ENCODE measurements at regions of chr7 and their contacts with region 1.

Region 1: GRCh38 chr7:87345166-87345927 is at the start of gene CROT:
- DNase-seq: peak; percentile 96 to 97 (median 96)
- ATAC-seq: peak; percentile 99
- H3K4me3 ChIP-seq: peak within 1 kb of the TSS; percentile 57
- H3K27ac ChIP-seq: peak within 1 kb of the TSS; percentile 38; the same call in 1 of the 3 replicates
- H3K4me1 ChIP-seq: peaks cover 7 to 8% of the 10 kb centered on the region in 2 experiments; a peak in 4 of 5 replicates
- H3K27me3 ChIP-seq: no peaks in the 10 kb centered on the region
- CTCF ChIP-seq: no peak
- EP300 ChIP-seq: no peak
- POLR2A ChIP-seq: peak; percentile 77
- RAD21 ChIP-seq: no peak
- polyA plus RNA-seq, gene CROT: 4.0 to 4.5 TPM

Region 2: DNA sequence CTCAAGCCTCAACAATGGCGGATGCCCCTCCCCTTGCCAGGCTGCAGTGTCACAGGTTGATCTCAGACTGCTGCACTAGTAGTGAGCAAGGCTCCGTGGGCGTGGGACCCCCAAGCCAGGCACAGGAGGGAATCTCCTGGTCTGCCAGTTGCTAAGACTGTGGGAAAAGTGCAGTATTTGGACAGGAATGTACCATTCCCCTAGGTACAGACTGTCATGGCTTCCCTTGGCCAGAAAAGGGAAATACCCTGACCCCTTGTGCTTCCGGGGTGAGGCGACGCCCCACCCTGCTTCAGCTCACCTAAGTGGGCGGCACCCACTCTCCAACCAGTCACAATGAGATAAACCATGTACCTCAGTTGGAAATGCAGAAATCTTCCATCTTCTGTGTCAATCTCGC is 81.8 kb before region 1 on chr7:
- CTCF ChIA-PET with region 1: no interaction called
- POLR2A ChIA-PET with region 1: no interaction called
- in situ Hi-C with region 1: no loop called
- intact Hi-C with region 1: no loop called
- DNase-seq: no peak
- ATAC-seq: peak; percentile 40; the same call in 1 of the 3 replicates
- H3K4me3 ChIP-seq: no peak overlapping the region
- H3K27ac ChIP-seq: no peak overlapping the region
- H3K4me1 ChIP-seq: no peaks in the 10 kb centered on the region; a peak in 1 of 5 replicates
- H3K27me3 ChIP-seq: no peaks in the 10 kb centered on the region
- CTCF ChIP-seq: no peak
- EP300 ChIP-seq: no peak
- POLR2A ChIP-seq: no peak
- RAD21 ChIP-seq: no peak

Region 3: GRCh38 chr7:87391020-87391701 is 45.8 kb after region 1 on chr7:
- CTCF ChIA-PET with region 1: no interaction called
- POLR2A ChIA-PET with region 1: no interaction called
- in situ Hi-C with region 1: no loop called
- intact Hi-C with region 1: loop called (anchors 5 kb)
- DNase-seq: peak; percentile 22 to 70 (median 38)
- ATAC-seq: peak; percentile 95
- H3K4me3 ChIP-seq: no peak overlapping the region
- H3K27ac ChIP-seq: peak overlapping the region; percentile 59
- H3K4me1 ChIP-seq: peaks cover 3 to 10% of the 10 kb centered on the region in 2 experiments; a peak in 2 of 5 replicates
- H3K27me3 ChIP-seq: no peaks in the 10 kb centered on the region
- CTCF ChIP-seq: peak in 2 of 3 experiments; percentile 12 to 43; a peak in 3 of 6 replicates
- EP300 ChIP-seq: 0 out of 2 replicates have a peak, but pooled peaks have one; percentile 27
- POLR2A ChIP-seq: peak; percentile 64
- RAD21 ChIP-seq: no peak

Region 4: GRCh38 chr7:88020953-88021665 is 675.8 kb after region 1 on chr7:
- CTCF ChIA-PET with region 1: no interaction called
- POLR2A ChIA-PET with region 1: no interaction called
- in situ Hi-C with region 1: no loop called
- intact Hi-C with region 1: no loop called
- DNase-seq: no peak
- ATAC-seq: no peak
- H3K4me3 ChIP-seq: no peak overlapping the region
- H3K27ac ChIP-seq: no peak overlapping the region
- H3K4me1 ChIP-seq: no peaks in the 10 kb centered on the region
- H3K27me3 ChIP-seq: no peaks in the 10 kb centered on the region
- CTCF ChIP-seq: no peak
- EP300 ChIP-seq: no peak
- POLR2A ChIP-seq: no peak
- RAD21 ChIP-seq: no peak

Measured in K562 (cell line).